ENCODE measurements at regions of chr1 and their contacts with region 1.

Region 1: DNA sequence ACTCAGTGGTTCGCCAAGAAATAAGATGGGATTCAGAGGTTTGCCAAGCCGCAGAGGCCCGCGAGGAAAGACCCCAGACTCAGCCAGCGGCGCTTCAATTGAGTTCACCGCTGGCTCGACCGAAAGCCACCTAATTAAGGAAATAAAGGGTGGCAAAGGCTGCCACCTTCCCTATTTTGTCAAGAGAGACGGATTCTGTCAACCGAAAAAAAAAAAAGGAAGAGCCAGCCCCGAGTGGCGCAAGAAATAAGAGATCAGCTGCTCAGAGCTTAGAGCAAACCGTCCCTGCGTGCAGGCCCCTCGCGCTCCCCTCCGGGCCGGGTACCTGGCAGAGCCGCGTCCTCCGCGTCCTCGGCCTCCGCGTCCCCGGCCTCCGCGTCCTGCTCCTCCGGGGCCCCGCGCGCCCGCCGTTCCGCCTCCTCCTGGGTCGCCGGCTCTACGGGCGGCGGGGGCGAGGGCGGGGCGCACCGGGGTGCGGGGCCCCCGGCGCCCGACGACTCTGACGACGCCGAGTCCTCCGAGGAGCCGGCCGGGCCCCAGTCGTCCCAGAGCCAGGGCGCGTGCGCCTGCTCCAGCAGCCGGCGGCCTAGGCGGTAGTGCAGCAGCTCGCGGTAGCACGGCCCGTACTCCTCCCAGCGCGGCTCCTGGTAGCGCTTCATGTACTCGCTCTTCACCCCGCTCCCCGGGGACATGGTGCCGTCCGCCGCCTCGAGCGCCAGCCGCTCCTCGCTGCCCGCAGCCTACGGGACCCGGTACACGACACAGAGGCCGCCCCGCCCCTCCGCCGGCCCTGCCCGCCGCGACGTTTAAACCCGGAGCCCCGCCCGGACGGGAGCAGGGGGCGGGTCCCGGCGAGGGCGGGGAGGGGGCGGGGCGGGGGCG is 832 bp downstream of the CCSAP start:
- DNase-seq: peak in 4 of 5 donors; percentile 85 to 89 (median 86)
- H3K4me3 ChIP-seq: peak overlapping the region; percentile 67 to 76
- H3K4me3 Mint-ChIP-seq: peak overlapping the region; percentile 87 to 95 (median 91)
- H3K27ac ChIP-seq: peak overlapping the region; percentile 68
- H3K27ac Mint-ChIP-seq: peak overlapping the region; percentile 81 to 94 (median 89)
- H3K4me1 ChIP-seq: peaks cover 55% of the 10 kb centered on the region
- H3K4me1 Mint-ChIP-seq: peaks cover 28 to 54% (median 43%) of the 10 kb centered on the region in 4 donors
- H3K27me3 ChIP-seq: no peaks in the 10 kb centered on the region
- H3K27me3 Mint-ChIP-seq: peaks cover 4 to 6% of the 10 kb centered on the region in 2 donors

Region 2: GRCh38 chr1:229270547-229271447 is 71.2 kb before region 1 on chr1 and contains the start of gene RAB4A:
- CTCF ChIA-PET with region 1: interaction called, 4 read pairs
- POLR2A ChIA-PET with region 1: interaction called, 16 read pairs
- intact Hi-C with region 1: loop called (anchors 1 kb)
- DNase-seq: peak; percentile 66 to 79 (median 77)
- H3K4me3 ChIP-seq: peak within 1 kb of the TSS; percentile 72 to 76
- H3K4me3 Mint-ChIP-seq: peak within 1 kb of the TSS; percentile 94 to 99 (median 96)
- H3K27ac ChIP-seq: peak within 1 kb of the TSS; percentile 14
- H3K27ac Mint-ChIP-seq: peak within 1 kb of the TSS; percentile 80 to 97 (median 89)
- H3K4me1 ChIP-seq: peaks cover 32% of the 10 kb centered on the region
- H3K4me1 Mint-ChIP-seq: peaks cover 28 to 41% (median 33%) of the 10 kb centered on the region in 4 donors
- H3K27me3 ChIP-seq: no peaks in the 10 kb centered on the region
- H3K27me3 Mint-ChIP-seq: no peaks in the 10 kb centered on the region
- total RNA-seq, gene RAB4A: 43.7 to 44.9 TPM

Region 3: DNA sequence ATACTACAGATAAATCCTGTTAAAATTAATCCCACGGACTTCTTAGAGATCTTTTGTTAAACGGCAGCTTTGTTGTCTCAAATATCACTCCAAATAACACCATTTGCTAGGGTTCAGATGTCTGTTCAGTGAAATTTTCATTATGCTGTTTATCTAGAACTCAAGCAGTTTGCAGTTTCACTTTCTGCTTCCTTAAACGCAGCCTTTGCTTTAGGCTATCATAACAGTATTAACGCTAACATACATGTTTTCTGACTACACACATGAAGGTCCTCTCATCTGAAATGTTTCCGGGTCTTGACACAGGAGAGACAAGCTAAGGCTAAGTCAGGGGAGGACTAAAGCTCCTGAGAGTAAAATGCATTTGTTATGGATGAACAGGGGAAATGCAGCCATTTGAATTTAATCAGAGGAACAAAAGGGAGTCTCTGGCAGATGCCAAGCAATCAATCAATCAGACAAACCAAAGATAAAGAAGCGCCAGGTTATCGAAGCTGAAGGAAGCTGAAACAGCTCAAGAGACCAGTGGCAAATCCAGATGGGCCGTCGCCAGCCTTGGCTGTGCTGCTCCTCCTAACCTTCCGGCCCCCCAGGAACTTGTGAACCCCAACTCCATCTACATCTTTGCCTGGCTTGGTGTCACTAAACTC is 16.0 kb before region 1 on chr1:
- CTCF ChIA-PET with region 1: no interaction called
- POLR2A ChIA-PET with region 1: interaction called, 21 read pairs
- intact Hi-C with region 1: loop called (anchors 1 kb)
- DNase-seq: peak in 2 of 5 donors; percentile 27 to 34
- H3K4me3 ChIP-seq: peak overlapping the region in 1 of 2 donors; percentile 3
- H3K4me3 Mint-ChIP-seq: peak overlapping the region in 7 of 8 donors; percentile 66 to 86 (median 78)
- H3K27ac ChIP-seq: peak overlapping the region; percentile 62
- H3K27ac Mint-ChIP-seq: peak overlapping the region; percentile 57 to 98 (median 97)
- H3K4me1 ChIP-seq: peaks cover 16% of the 10 kb centered on the region
- H3K4me1 Mint-ChIP-seq: peaks cover 7 to 56% (median 43%) of the 10 kb centered on the region in 4 donors
- H3K27me3 ChIP-seq: no peaks in the 10 kb centered on the region
- H3K27me3 Mint-ChIP-seq: no peaks in the 10 kb centered on the region

Region 4: GRCh38 chr1:229410692-229411443 is 68.9 kb after region 1 on chr1:
- CTCF ChIA-PET with region 1: no interaction called
- POLR2A ChIA-PET with region 1: no interaction called
- intact Hi-C with region 1: no loop called
- DNase-seq: no peak
- H3K4me3 ChIP-seq: no peak overlapping the region
- H3K4me3 Mint-ChIP-seq: peak overlapping the region in 3 of 8 donors; percentile 1 to 25 (median 21)
- H3K27ac ChIP-seq: no peak overlapping the region
- H3K27ac Mint-ChIP-seq: no peak overlapping the region
- H3K4me1 ChIP-seq: peaks cover 8% of the 10 kb centered on the region
- H3K4me1 Mint-ChIP-seq: peaks cover 8 to 17% (median 12%) of the 10 kb centered on the region in 4 donors
- H3K27me3 ChIP-seq: peaks cover 16% of the 10 kb centered on the region
- H3K27me3 Mint-ChIP-seq: peaks cover 39 to 49% of the 10 kb centered on the region in 2 donors

Region 5: GRCh38 chr1:229428256-229428655 is 86.2 kb after region 1 on chr1:
- CTCF ChIA-PET with region 1: no interaction called
- POLR2A ChIA-PET with region 1: no interaction called
- intact Hi-C with region 1: no loop called
- DNase-seq: no peak
- H3K4me3 ChIP-seq: no peak overlapping the region
- H3K4me3 Mint-ChIP-seq: no peak overlapping the region
- H3K27ac ChIP-seq: no peak overlapping the region
- H3K27ac Mint-ChIP-seq: no peak overlapping the region
- H3K4me1 ChIP-seq: peaks cover 15% of the 10 kb centered on the region
- H3K4me1 Mint-ChIP-seq: peaks cover 11 to 23% (median 18%) of the 10 kb centered on the region in 4 donors
- H3K27me3 ChIP-seq: peaks cover 17% of the 10 kb centered on the region
- H3K27me3 Mint-ChIP-seq: peaks cover 47 to 48% of the 10 kb centered on the region in 2 donors

Region 6: DNA sequence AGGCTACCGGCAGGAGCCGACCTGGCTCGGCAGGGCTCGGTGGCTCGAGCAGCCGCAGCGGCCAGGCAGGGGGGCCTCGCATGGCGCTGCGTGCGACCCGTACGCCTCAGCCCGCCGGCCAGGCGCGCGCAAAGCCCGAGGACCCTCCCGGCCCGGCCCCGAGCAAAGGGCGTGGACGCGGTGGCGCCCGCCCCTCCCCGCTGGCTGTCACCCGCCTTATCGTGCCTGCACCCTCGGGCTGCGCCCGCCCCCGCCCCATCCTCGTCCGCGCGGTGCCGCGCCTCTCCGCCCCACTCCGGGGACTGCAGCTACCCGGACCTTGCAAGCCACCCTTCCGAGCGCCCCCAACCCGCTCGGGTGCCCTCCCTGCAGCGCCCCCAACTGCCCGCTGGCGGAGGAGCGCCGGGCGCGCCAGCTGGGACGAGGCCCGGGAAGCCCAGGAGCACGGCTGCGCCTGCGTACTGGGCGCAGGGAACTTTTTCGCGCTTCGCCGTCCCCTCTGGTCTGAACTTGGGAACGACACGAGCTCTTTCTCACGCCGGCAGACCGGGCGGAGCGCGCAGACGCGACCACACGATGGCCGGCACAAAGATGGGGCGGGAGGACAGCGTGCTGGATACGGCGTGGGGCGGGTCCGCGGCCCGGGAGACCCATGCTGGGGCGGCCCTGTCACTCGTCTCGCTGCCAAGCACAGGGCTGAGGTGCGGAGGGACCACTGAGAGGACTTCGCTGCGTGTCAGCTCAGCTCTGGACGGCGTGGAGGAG is 216.7 kb after region 1 on chr1 and contains the start of gene ABCB10:
- CTCF ChIA-PET with region 1: no interaction called
- POLR2A ChIA-PET with region 1: interaction called, 5 read pairs
- intact Hi-C with region 1: loop called (anchors 2 kb)
- DNase-seq: peak; percentile 79 to 90 (median 82)
- H3K4me3 ChIP-seq: peak within 1 kb of the TSS; percentile 24 to 76
- H3K4me3 Mint-ChIP-seq: peak within 1 kb of the TSS; percentile 92 to 98 (median 96)
- H3K27ac ChIP-seq: peak within 1 kb of the TSS; percentile 46
- H3K27ac Mint-ChIP-seq: peak within 1 kb of the TSS; percentile 89 to 98 (median 93)
- H3K4me1 ChIP-seq: peaks cover 37% of the 10 kb centered on the region
- H3K4me1 Mint-ChIP-seq: peaks cover 28 to 50% (median 39%) of the 10 kb centered on the region in 4 donors
- H3K27me3 ChIP-seq: no peaks in the 10 kb centered on the region
- H3K27me3 Mint-ChIP-seq: no peaks in the 10 kb centered on the region
- total RNA-seq, gene ABCB10: 19.7 to 20.2 TPM

Region 7: DNA sequence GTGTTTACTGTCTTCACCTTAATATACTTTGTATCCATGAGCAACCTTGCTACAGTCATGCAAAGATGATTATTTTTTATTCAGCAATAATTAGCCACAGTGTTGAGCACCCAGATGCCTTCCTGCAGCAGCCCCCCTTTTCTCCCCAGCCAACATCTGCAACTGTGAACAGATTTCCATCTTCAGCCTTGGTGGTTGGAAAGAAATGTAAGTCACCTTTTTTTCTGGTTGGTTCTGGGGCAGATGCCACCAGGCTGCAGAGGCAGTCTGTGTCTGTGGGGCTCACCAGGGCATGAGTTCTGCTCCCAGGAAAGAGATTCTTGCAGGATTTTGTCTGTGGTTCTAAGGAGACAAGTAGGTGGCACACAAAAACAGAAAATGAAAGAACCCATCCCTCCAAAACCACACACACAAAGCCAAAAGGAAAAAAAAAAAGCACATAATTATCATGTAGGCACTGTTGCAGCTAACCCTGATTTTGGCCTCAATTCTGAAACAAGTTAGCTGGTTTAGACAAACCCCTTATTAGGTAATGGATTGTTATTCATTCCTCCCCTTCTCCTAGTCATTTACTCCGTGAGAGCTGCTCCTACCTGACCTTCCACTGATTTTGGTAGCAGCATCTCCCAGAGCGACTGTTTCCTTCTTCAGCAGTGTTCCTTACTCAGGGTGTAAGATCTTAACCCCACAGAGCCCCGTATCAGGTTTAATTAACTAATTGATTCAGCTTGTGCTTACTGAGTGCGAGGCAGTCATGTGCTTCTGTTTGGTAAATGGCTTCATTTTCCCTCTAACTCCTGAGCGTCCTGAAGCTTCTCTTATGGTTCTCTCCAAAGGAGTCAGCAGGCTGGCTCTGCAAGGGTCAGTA is 761.5 kb after region 1 on chr1:
- CTCF ChIA-PET with region 1: no interaction called
- POLR2A ChIA-PET with region 1: no interaction called
- intact Hi-C with region 1: no loop called
- DNase-seq: no peak
- H3K4me3 ChIP-seq: no peak overlapping the region
- H3K4me3 Mint-ChIP-seq: peak overlapping the region in 6 of 8 donors; percentile 4 to 82 (median 39)
- H3K27ac ChIP-seq: no peak overlapping the region
- H3K27ac Mint-ChIP-seq: peak overlapping the region in 3 of 7 donors; percentile 10 to 85 (median 65)
- H3K4me1 ChIP-seq: peaks cover 34% of the 10 kb centered on the region
- H3K4me1 Mint-ChIP-seq: peaks cover 37 to 74% (median 46%) of the 10 kb centered on the region in 4 donors
- H3K27me3 ChIP-seq: no peaks in the 10 kb centered on the region
- H3K27me3 Mint-ChIP-seq: no peaks in the 10 kb centered on the region

Measured in CD4-positive, alpha-beta memory T cell (primary cell).